Ascending aorta (tissue), 2 donors: ENCODE measurements at regions of chr14 and their contacts with region 1.

Region 1: GRCh38 chr14:24160850-24161804 is at the start of gene IRF9:
- DNase-seq: peak; percentile 90 to 99
- H3K4me3 ChIP-seq: peak within 1 kb of the TSS; percentile 65 to 77
- H3K27ac ChIP-seq: peak within 1 kb of the TSS; percentile 85 to 88
- H3K4me1 ChIP-seq: peaks cover 9 to 12% of the 10 kb centered on the region in 2 donors
- H3K27me3 ChIP-seq: no peaks in the 10 kb centered on the region
- CTCF ChIP-seq: peak; percentile 90 to 95 (median 91)
- total RNA-seq, gene IRF9: 24.7 TPM

Region 2: GRCh38 chr14:23942387-23942986 is 218.6 kb before region 1 on chr14:
- intact Hi-C with region 1: no loop called
- DNase-seq: no peak
- H3K4me3 ChIP-seq: no peak overlapping the region
- H3K27ac ChIP-seq: no peak overlapping the region
- H3K4me1 ChIP-seq: no peaks in the 10 kb centered on the region
- H3K27me3 ChIP-seq: no peaks in the 10 kb centered on the region
- CTCF ChIP-seq: no peak

Region 3: GRCh38 chr14:24095271-24096068 is 65.7 kb before region 1 on chr14:
- intact Hi-C with region 1: no loop called
- DNase-seq: no peak
- H3K4me3 ChIP-seq: peak overlapping the region; percentile 72 to 81
- H3K27ac ChIP-seq: peak overlapping the region; percentile 92 to 95
- H3K4me1 ChIP-seq: peaks cover 0 to 11% of the 10 kb centered on the region in 2 donors
- H3K27me3 ChIP-seq: no peaks in the 10 kb centered on the region
- CTCF ChIP-seq: no peak

Region 4: GRCh38 chr14:24135834-24136542 is 25.1 kb before region 1 on chr14 and contains the start of gene PSME1:
- intact Hi-C with region 1: loop called (anchors 1 kb)
- DNase-seq: peak; percentile 66 to 94
- H3K4me3 ChIP-seq: peak within 1 kb of the TSS; percentile 82 to 96
- H3K27ac ChIP-seq: peak within 1 kb of the TSS; percentile 80 to 91
- H3K4me1 ChIP-seq: peaks cover 5 to 27% of the 10 kb centered on the region in 2 donors
- H3K27me3 ChIP-seq: no peaks in the 10 kb centered on the region
- CTCF ChIP-seq: peak in 1 of 3 experiments; percentile 16
- total RNA-seq, gene PSME1: 55.5 TPM

Region 5: DNA sequence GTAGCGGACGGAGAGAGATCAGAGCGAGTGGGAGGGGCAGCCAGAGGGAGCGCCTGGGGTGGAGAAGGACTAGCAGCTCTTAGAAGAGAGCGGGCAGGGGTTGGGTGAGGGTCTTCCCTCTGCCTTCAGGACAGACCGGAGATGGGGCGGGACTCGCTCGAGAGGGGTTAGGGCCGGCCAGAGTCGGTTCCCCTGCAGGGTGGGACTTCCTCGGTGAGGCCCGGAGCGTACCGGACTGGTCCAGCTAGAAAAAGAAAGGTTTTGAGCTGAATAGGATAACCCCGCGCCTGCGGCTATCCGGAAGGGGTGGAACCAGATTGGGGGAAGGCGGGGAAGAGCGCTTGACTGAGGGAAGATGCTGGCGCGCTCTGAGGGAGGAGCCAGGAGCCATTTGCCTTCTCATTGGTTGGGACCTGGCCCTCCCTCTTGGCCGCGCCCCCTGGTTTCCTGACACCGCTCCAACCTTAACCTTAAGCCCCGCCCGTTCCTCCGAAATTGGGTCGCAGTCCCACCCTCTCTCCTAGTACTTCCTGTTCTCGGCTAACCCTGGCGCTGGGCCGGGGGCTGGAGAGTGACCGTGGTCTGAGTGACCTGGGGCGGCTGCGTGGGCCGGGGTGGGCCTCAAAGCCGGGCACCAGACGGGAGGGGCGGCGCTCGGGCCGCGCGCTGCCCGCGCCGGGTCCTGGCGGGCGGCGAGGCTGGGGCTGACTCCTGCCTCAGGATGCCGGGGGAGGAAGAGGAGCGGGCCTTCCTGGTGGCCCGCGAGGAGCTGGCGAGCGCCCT is 14.0 kb before region 1 on chr14 and contains the start of gene RNF31:
- intact Hi-C with region 1: loop called (anchors 1 kb)
- DNase-seq: peak; percentile 95 to 99
- H3K4me3 ChIP-seq: peak within 1 kb of the TSS; percentile 76 to 100
- H3K27ac ChIP-seq: peak within 1 kb of the TSS; percentile 75 to 90
- H3K4me1 ChIP-seq: peaks cover 21 to 23% of the 10 kb centered on the region in 2 donors
- H3K27me3 ChIP-seq: no peaks in the 10 kb centered on the region
- CTCF ChIP-seq: no peak
- total RNA-seq, gene RNF31: 182 TPM

Region 6: DNA sequence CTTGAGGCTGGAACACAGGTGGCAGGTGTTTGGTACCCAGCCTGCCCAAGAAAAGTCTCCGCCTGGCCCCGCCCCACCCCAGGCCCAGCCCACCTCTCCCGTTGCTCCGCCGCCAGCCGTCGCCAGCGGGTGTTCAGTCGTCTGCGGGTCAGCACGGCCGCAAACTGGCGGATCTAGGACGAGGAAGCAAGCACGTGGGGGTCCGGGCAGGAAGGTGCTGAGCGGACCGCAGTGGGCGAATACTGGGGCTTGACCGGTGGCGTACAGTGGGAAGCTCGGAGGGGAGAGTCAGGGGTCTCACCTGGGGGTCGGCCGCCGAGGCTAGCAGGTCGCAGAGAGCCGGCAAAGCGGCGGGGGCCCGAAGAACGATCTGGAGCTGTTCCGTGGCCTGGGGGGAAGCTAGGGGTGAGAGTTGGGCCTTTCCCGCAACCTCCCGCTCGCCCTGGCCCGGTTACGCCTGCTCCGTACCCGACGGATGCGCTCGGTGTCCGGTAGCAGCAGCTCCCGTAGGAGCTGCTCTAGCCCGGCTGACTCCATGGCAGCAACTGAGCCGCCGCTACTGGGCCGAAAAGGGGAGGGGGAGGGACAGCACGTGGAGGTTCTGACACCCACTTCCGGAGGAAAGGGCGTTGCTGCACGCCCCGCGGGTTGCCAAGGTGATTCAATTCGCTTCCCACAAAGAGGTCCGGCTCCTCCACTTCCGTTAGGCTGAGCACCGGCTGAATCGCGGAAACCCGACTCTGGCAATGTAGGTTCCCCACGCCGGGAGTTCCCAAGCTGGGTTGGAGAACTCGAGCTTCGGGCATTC is 27.3 kb after region 1 on chr14 and contains the start of gene IPO4:
- intact Hi-C with region 1: loop called (anchors 2 kb)
- DNase-seq: peak; percentile 81 to 97
- H3K4me3 ChIP-seq: peak within 1 kb of the TSS; percentile 50 to 83
- H3K27ac ChIP-seq: peak within 1 kb of the TSS; percentile 43 to 58
- H3K4me1 ChIP-seq: peaks cover 0 to 19% of the 10 kb centered on the region in 2 donors
- H3K27me3 ChIP-seq: no peaks in the 10 kb centered on the region
- CTCF ChIP-seq: no peak
- total RNA-seq, gene IPO4: 140 TPM